ENCODE measurements at regions of chr1 and their contacts with region 1.

Region 1: GRCh38 chr1:193519922-193520321 is 333.5 kb upstream of the B3GALT2 start:
- DNase-seq: no peak
- H3K4me3 ChIP-seq: no peak overlapping the region
- CTCF ChIP-seq: no peak
- POLR2A ChIP-seq: no peak

Region 2: DNA sequence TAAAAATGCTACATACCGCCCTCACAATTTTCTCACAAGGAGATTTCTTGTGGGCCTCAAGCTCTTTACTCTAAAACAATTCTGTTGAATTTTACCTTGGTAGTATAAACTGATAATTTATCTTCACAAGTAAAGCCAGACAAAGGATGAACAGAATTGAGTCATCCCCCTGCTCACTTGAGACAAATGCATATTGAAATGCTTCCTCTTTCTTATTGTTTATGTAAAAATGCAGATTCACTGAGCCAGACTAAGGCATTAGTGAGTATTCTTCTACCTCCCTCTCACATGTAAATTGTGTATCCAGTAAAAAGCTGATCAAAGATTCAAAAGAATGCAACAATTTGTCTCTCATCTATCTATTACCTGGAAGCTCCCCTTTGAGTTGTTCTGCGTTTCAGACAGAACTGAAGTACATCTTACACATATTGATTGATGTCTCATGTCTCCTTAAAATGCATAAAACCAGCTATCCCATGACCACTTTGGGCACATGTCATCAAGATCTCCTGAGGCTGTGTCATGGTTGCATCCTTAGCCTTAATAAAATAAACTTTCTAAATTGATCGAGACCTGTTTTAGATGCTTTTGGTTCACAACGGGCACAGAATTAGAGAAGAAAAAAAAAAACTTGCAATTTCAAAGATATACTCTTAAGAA is 409.6 kb after region 1 on chr1:
- intact Hi-C with region 1: loop called (anchors 5 kb)
- DNase-seq: no peak
- H3K4me3 ChIP-seq: no peak overlapping the region
- CTCF ChIP-seq: no peak
- POLR2A ChIP-seq: no peak

Measured in lower leg skin (tissue), 4 donors.